Breast epithelium (tissue), 4 donors: ENCODE measurements at regions of chr16 and their contacts with region 1.

Region 1: GRCh38 chr16:106623-107324 is 28.7 kb downstream of the MPG start:
- DNase-seq: no peak
- H3K4me3 ChIP-seq: no peak overlapping the region
- H3K27ac ChIP-seq: no peak overlapping the region
- H3K4me1 ChIP-seq: peaks cover 11 to 12% of the 10 kb centered on the region in 2 donors
- H3K27me3 ChIP-seq: no peaks in the 10 kb centered on the region
- CTCF ChIP-seq: peak; percentile 38 to 80 (median 74)
- POLR2A ChIP-seq: no peak

Region 2: DNA sequence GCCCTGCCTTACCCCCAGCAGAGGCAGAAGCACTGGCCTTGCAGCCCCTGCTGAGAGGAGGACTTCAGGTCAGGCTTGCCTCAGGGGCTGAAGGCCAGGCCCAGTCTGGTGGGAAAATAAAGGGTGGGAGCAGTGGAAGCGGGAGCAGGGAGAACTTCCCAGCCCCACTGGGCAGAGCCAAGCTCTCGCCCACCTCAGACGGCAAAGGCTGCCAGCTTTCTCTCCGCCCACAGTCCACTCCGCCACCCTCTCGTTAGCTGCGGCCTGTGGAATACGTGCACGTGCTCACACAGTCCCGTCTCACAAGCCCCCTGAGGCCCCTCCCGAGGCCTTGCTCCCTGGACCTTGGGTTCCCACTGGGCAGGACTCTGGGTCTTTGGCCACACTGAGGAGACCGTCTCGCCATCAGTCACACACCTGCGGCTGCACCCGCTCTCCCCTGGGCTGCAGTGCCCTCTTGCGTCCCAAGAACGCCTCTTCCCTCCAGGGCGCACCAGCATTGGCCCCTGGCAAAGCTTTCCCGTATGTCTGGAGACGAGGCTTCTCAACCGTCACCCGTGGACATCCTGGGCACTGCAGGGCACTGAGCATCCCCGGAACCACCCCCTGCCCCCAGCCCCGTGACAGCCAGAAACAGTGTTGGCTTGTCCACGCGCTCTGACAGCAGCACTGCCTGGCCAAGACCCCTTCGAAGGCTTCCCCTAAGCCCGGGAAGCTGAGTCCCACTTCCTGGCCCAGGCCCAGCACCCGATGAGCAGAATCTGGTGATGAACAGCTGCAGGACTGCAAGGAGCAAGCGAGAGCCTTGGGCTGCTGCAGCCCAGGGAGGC is 255.3 kb after region 1 on chr16:
- intact Hi-C with region 1: loop called (anchors 5 kb)
- DNase-seq: peak; percentile 54 to 78
- H3K4me3 ChIP-seq: peak overlapping the region in 1 of 3 donors; percentile 24
- H3K27ac ChIP-seq: no peak overlapping the region
- H3K4me1 ChIP-seq: no peaks in the 10 kb centered on the region
- H3K27me3 ChIP-seq: peaks cover 0 to 12% of the 10 kb centered on the region in 2 donors
- CTCF ChIP-seq: peak; percentile 17 to 77 (median 68)
- POLR2A ChIP-seq: no peak

Region 3: GRCh38 chr16:1497014-1497598 is 1390.3 kb after region 1 on chr16:
- intact Hi-C with region 1: no loop called
- DNase-seq: no peak
- H3K4me3 ChIP-seq: no peak overlapping the region
- H3K27ac ChIP-seq: no peak overlapping the region
- H3K4me1 ChIP-seq: peaks cover 6 to 12% of the 10 kb centered on the region in 2 donors
- H3K27me3 ChIP-seq: no peaks in the 10 kb centered on the region
- CTCF ChIP-seq: no peak
- POLR2A ChIP-seq: no peak